HEK293 (cell line): ENCODE measurements at regions of chr2 and their contacts with region 1.

Region 1: GRCh38 chr2:69914170-69914960 is 544 bp upstream of the MXD1 start:
- H3K4me3 ChIP-seq: peak overlapping the region; percentile 61
- H3K27ac ChIP-seq: peak overlapping the region; percentile 91
- H3K4me1 ChIP-seq: no peaks in the 10 kb centered on the region
- CTCF ChIP-seq: peak; percentile 80

Region 2: DNA sequence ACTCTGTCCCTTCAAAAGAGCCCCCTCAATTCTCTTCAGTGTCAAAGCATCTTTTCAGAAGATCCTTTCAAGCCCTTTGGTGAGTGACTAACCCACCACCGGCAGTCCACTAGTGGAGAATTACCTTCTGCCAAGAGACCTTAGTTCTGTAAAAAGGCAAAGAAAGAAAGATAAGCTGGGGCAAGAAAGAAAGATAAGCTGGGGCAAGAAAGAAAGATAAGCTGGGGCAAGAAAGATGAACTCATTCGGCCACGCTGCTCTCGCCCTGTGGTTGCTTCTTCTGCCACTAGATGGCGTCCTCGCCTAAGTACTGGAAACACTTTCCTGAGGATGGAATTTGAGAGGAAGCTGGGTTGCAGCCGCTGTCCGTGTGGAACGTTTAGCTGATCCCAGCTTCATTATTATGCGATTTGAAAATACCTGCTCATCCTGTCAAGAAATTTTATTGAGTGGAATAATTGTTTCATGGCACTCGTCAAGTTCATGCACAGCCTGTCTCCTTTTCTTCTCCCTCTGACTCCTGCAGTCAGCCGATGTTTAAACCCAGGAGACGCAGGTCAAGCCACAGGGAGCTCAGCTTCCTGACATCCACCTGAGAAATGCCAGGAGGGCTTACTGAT is 189.7 kb before region 1 on chr2:
- CTCF ChIA-PET with region 1: interaction called, 74 read pairs
- POLR2A ChIA-PET with region 1: interaction called, 25 read pairs
- H3K4me3 ChIP-seq: peak overlapping the region; percentile 15
- H3K27ac ChIP-seq: no peak overlapping the region
- H3K4me1 ChIP-seq: no peaks in the 10 kb centered on the region
- CTCF ChIP-seq: peak; percentile 90

Region 3: GRCh38 chr2:69933839-69934613 is 19.7 kb after region 1 on chr2:
- CTCF ChIA-PET with region 1: interaction called, 4 read pairs
- POLR2A ChIA-PET with region 1: interaction called, 11 read pairs
- H3K4me3 ChIP-seq: no peak overlapping the region
- H3K27ac ChIP-seq: no peak overlapping the region
- H3K4me1 ChIP-seq: no peaks in the 10 kb centered on the region; the same call in 1 of the 2 replicates
- CTCF ChIP-seq: no peak

Region 4: DNA sequence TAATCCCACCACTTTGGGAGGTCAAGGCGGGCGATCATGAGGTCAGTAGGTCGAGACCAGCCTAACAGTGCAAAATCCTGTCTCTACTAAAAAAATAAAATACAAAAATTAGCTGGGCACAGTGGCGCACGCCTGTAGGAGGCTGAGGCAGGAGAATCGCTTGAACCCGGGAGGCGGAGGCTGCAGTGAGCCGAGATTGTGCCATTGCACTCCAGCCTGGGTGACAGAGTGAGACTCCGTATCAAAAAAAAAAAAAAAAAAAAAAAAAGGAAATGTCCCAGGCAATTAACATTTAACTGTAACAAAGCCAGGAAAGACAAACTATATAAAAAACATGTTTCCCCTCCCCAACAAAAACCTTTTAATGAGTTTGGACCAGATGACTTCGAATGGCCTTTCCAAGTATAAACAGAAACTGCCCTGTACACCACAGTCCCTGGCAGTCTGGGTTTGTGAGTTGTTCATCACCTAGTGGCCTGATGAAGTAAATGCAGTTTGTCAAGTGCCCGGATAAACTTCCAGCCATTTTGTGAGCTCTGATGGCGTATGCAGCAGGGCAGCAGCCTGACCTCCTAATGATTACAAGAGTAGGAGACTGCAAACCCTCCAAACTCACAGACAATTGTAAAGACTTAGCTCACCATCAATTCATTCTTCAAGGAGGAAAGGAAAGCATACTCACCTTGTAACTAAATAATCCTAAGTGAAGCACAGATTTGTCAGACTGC is 156.3 kb after region 1 on chr2:
- CTCF ChIA-PET with region 1: interaction called, 49 read pairs
- POLR2A ChIA-PET with region 1: interaction called, 30 read pairs
- H3K4me3 ChIP-seq: no peak overlapping the region
- H3K27ac ChIP-seq: 0 out of 2 replicates have a peak overlapping the region, but pooled peaks have one; percentile 52
- H3K4me1 ChIP-seq: no peaks in the 10 kb centered on the region
- CTCF ChIP-seq: no peak

Region 5: DNA sequence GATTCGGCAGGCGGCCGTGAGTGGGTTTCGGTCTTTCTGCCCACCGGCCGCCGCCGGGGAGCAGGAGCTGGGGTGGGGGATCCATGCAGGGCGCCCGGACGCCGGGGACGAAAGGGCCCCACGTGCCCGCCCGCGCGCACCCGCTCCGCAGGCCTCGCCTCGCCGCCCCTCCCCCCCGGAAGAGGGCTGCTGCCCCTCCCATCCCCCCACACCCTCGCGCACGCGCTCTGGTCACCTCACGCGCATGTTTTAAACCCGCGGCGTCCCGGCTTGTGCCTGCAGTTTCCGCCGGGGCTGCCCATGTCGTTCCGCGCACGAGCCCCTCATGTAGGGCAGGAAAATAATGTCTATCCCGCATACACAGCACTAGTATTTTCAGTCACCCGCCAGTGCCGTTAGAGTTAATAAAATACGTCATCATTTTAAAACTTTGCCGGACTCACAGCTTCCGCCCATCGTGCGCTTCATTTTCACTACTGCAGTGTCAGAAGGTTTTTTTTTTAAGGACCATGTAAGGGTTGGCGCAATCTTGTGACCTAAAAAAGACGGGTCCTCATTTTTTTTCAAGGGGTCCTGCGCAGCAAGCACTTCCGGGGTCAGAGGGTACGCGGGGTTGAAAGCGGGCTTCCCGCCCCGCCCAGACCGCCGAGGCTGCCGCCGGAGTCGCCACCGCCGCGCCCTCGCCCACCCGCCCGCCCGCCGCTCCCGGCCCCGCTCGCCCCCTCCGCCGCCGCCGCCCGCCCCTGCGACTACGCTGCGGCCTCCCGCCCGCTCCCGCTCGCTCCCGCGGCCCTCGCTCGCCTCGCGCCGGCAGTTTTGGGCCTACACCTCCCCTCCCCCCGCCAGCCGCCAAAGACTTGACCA is 172.7 kb after region 1 on chr2 and contains the start of gene PCBP1:
- CTCF ChIA-PET with region 1: interaction called, 4 read pairs
- POLR2A ChIA-PET with region 1: interaction called, 56 read pairs
- H3K4me3 ChIP-seq: peak within 1 kb of the TSS; percentile 70
- H3K27ac ChIP-seq: peak within 1 kb of the TSS; percentile 100
- H3K4me1 ChIP-seq: peaks cover 11% of the 10 kb centered on the region
- CTCF ChIP-seq: no peak

Region 6: DNA sequence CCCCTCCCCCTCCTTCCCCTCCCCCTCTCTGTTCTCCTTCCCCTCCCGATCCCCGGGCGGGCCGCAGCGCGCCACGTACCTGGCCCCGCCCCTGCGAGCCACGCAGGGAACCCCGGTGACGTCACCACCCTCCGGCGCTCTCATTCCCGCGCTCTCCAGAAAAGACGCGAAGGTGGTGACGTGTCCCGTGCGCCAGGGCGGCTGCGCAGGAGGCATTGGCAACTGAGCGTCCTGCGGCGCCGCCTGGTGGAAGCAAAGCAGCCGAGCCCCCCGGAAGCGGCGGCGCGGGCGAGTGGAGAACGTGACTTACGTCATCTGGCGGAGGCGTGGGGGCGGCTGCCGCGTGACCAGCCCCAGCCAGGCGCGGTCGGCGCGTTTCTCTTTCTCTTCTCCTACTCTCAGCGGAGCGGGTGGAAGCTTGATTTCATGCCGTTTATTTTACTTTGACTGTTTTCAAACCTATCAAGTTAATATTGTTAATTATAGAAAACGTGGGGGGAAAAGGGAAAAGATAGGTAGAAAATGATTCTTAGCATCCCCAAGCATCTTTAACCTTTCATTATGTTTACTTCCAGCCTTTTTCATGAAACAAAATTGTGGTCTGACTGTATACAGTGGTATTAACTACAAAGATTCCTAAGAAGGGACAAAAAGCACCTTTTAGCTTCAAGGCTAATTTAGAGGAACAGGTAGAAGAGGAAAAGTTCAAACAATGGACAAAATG is 228.4 kb after region 1 on chr2:
- CTCF ChIA-PET with region 1: interaction called, 20 read pairs
- POLR2A ChIA-PET with region 1: interaction called, 30 read pairs
- H3K4me3 ChIP-seq: peak overlapping the region; percentile 54
- H3K27ac ChIP-seq: peak overlapping the region; percentile 91
- H3K4me1 ChIP-seq: peaks cover 6% of the 10 kb centered on the region; the same call in 1 of the 2 replicates
- CTCF ChIP-seq: peak; percentile 100

Region 7: DNA sequence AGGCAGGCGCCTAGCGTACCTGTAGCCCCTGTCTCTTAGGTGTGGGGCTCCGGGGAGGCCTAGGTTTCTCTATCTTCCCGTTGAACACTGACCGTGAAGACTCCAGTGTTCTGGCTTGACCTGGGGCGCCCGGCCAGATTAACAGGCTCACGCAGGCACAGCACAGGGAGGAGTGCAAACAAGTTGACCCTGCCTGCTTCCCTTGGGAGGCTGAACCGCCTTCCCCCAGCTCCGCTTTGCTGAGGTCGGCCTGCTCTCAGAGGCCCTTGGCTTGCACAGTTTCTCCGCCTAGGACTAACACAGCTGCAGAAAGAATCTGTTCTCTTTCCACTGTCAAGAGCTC is 344.1 kb after region 1 on chr2:
- CTCF ChIA-PET with region 1: interaction called, 5 read pairs
- POLR2A ChIA-PET with region 1: interaction called, 35 read pairs
- H3K4me3 ChIP-seq: peak overlapping the region; percentile 85
- H3K27ac ChIP-seq: peak overlapping the region; percentile 75; the same call in 1 of the 2 replicates
- H3K4me1 ChIP-seq: 0 out of 2 replicates have a peak, but pooled peaks cover 10% of the 10 kb centered on the region
- CTCF ChIP-seq: no peak